Ascending aorta (tissue), 2 donors: ENCODE measurements at regions of chr9 and their contacts with region 1.

Region 1: DNA sequence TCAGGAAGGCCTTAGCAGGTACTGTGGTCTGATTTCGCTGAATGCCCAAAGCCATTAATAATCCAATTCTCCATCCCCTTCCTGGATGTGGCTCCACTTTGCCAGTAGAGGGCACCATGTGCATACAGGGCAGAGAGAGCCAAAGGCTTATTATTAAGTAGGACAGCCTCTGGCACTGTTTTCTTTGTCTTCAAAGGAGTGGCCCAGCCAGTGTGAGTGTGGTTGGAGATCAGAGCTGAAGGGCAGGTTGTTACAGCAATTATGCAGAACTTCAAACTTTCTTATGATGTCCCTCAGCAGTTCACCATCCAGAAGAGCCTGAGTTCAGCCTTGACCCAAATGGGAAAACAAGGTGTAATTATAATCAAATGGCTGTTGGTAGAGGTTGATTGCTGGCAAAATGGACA is 38.6 kb upstream of the CEMIP2 start:
- DNase-seq: peak; percentile 21 to 79
- H3K4me3 ChIP-seq: no peak overlapping the region
- H3K27ac ChIP-seq: no peak overlapping the region
- H3K4me1 ChIP-seq: peaks cover 0 to 3% of the 10 kb centered on the region in 2 donors
- H3K27me3 ChIP-seq: no peaks in the 10 kb centered on the region
- CTCF ChIP-seq: peak; percentile 80 to 97 (median 82)

Region 2: DNA sequence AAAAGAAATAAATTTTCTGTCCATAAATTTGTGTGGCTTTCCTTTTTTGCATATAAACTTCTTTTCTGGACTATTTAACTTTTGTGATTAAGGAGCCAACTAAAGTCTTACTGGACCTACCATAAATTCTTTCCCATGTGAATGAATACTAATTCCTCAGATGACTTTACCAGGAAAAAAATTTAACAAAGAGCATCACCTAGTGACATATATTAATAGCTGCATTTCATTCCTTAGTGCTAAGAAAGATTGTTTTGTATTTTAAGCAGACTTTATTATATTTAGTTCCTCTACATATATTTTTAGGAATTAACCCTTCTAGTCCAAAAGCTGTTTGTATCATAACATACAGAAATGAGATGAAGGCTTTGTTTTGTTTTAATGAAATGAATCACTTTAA is 168.9 kb after region 1 on chr9:
- intact Hi-C with region 1: loop called (anchors 1 kb)
- DNase-seq: no peak
- H3K4me3 ChIP-seq: no peak overlapping the region
- H3K27ac ChIP-seq: no peak overlapping the region
- H3K4me1 ChIP-seq: no peaks in the 10 kb centered on the region
- H3K27me3 ChIP-seq: no peaks in the 10 kb centered on the region
- CTCF ChIP-seq: peak; percentile 27 to 47 (median 28)

Region 3: GRCh38 chr9:72025931-72026342 is 219.0 kb after region 1 on chr9:
- intact Hi-C with region 1: loop called (anchors 1 kb)
- DNase-seq: no peak
- H3K4me3 ChIP-seq: no peak overlapping the region
- H3K27ac ChIP-seq: no peak overlapping the region
- H3K4me1 ChIP-seq: no peaks in the 10 kb centered on the region
- H3K27me3 ChIP-seq: no peaks in the 10 kb centered on the region
- CTCF ChIP-seq: no peak